ENCODE measurements at regions of chr1 and their contacts with region 1.

Region 1: GRCh38 chr1:45550401-45551351 is at the start of gene AKR1A1:
- DNase-seq: peak; percentile 94
- ATAC-seq: peak; percentile 98
- total RNA-seq, gene AKR1A1: 43.2 TPM

Region 2: GRCh38 chr1:44594871-44595746 is 955.6 kb before region 1 on chr1:
- intact Hi-C with region 1: no loop called
- DNase-seq: peak; percentile 89
- ATAC-seq: peak; percentile 97

Region 3: GRCh38 chr1:44807262-44808062 is 743.2 kb before region 1 on chr1 and contains the start of gene DYNLT4:
- intact Hi-C with region 1: no loop called
- DNase-seq: peak; percentile 96
- ATAC-seq: peak; percentile 83
- total RNA-seq, gene DYNLT4: 0.35 TPM

Region 4: GRCh38 chr1:45508295-45509151 is 42.2 kb before region 1 on chr1:
- intact Hi-C with region 1: loop called (anchors 10 kb)
- DNase-seq: no peak
- ATAC-seq: peak; percentile 73

Measured in left ventricle myocardium superior (tissue), 1 donor.